K562 (cell line): ENCODE measurements at regions of chr5 and their contacts with region 1.

Region 1: DNA sequence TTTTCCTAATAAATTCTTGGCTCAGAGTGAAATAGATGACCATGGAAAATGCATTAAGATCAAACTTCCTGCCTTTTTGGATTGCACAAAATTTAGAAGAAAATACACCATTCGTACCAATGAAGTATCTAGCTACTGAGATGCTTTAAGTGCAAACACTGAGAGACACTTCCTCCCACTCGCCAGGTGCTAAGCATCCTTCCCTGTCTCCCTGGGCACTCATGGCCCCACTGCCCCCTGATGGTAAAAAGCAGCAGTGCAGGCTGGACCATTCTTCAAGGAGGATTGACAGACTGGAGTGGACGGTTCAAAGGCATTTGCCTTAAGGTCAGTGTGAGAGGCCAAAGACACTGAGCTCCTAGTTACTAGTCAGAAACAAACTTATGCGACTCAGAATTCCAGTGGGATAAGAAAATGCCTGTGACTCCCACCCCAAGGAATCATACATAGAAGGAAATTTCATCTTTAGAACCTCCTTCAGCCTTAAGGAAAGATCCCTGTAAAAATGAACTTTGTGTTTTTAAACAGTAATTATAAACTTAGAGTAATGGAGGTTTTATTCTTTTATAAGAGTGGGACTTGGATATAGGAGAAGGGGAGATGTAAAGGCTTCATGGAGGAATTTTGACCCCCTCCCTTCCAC is 86.0 kb upstream of the SLC30A5 start:
- DNase-seq: peak; percentile 66 to 79 (median 69)
- ATAC-seq: peak; percentile 96
- H3K4me3 ChIP-seq: no peak overlapping the region
- H3K27ac ChIP-seq: no peak overlapping the region
- H3K4me1 ChIP-seq: no peaks in the 10 kb centered on the region
- H3K27me3 ChIP-seq: peaks cover 0 to 3% of the 10 kb centered on the region in 2 experiments; a peak in 1 of 5 replicates
- CTCF ChIP-seq: peak; percentile 84 to 94 (median 90)
- EP300 ChIP-seq: no peak
- POLR2A ChIP-seq: no peak
- RAD21 ChIP-seq: peak; percentile 81 to 86

Region 2: DNA sequence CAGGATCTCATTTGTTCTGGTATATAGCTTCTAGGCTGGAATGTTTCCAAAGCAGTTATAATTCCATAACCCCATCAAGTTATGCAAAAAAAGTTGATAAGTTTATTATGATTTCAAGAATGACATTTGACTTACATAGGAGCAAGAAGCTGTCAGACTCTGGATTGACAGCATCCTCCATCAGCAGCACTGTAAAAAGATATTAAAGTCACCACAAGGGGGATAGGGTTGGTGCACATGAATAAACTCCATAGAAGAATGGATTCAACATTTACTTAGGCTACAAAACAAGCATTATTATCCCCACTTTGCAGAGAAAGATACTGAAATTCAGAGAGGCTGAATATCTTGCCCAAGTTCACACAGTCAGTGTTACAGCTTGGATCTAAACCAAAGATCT is 123.0 kb before region 1 on chr5:
- CTCF ChIA-PET with region 1: no interaction called
- POLR2A ChIA-PET with region 1: no interaction called
- in situ Hi-C with region 1: no loop called
- intact Hi-C with region 1: loop called (anchors 10 kb)
- DNase-seq: peak in 3 of 4 experiments; percentile 8 to 23 (median 23)
- ATAC-seq: no peak
- H3K4me3 ChIP-seq: no peak overlapping the region
- H3K27ac ChIP-seq: no peak overlapping the region
- H3K4me1 ChIP-seq: no peaks in the 10 kb centered on the region
- H3K27me3 ChIP-seq: 0 out of 5 replicates have a peak, but pooled peaks cover 0 to 4% of the 10 kb centered on the region in 2 experiments
- CTCF ChIP-seq: peak; percentile 24 to 33 (median 25); a peak in 4 of 6 replicates
- EP300 ChIP-seq: no peak
- POLR2A ChIP-seq: no peak
- RAD21 ChIP-seq: peak in 1 of 2 experiments; percentile 11; a peak in 1 of 4 replicates

Region 3: GRCh38 chr5:69492391-69492922 is 484.6 kb after region 1 on chr5 and contains the start of gene OCLN:
- CTCF ChIA-PET with region 1: no interaction called
- POLR2A ChIA-PET with region 1: no interaction called
- in situ Hi-C with region 1: no loop called
- intact Hi-C with region 1: no loop called
- DNase-seq: peak in 2 of 4 experiments; percentile 17
- ATAC-seq: peak; percentile 56
- H3K4me3 ChIP-seq: no peak within 1 kb of the TSS
- H3K27ac ChIP-seq: no peak within 1 kb of the TSS
- H3K4me1 ChIP-seq: peaks cover 0 to 19% of the 10 kb centered on the region in 2 experiments; a peak in 2 of 5 replicates
- H3K27me3 ChIP-seq: peaks cover 42 to 48% of the 10 kb centered on the region in 2 experiments
- CTCF ChIP-seq: no peak
- EP300 ChIP-seq: no peak
- POLR2A ChIP-seq: no peak
- RAD21 ChIP-seq: no peak
- polyA plus RNA-seq, gene OCLN: 0.06 to 0.08 TPM